OCI-LY7 (cell line): ENCODE measurements at regions of chr11 and their contacts with region 1.

Region 1: GRCh38 chr11:43282607-43283440 is 29.0 kb upstream of the API5 start:
- DNase-seq: peak; percentile 53
- H3K4me3 ChIP-seq: no peak overlapping the region
- H3K27ac ChIP-seq: no peak overlapping the region
- H3K4me1 ChIP-seq: no peaks in the 10 kb centered on the region
- CTCF ChIP-seq: peak; percentile 99

Region 2: DNA sequence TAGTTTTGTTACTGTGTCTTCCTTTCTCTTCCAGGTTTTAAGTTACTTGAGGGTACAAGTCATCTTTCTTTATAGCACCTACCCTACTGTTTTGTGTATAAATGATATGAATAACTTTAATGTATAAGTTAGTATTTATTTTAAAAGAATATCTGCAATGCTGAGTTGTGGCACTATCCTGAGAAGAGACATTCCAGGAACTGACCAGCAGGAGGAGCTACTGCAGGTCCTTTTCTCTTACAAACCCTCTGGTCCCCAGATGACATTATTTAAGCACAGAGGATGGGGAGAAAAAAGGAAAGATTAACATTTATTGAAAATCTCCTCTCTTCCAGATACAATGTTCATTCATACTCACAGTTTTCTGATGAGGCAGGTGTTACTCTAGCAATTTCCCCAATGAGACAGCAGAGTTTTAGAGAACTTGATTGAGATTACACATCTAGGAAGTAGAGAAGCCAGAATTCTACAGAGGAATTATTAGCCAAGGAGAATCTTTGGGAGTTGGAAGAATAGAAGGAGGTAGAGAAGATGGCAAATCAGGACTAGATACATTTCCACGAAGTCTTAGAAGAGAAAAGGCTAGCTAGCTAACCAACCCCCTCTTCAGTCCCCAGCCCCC is 512.3 kb before region 1 on chr11:
- CTCF ChIA-PET with region 1: no interaction called
- POLR2A ChIA-PET with region 1: interaction called, 3 read pairs
- intact Hi-C with region 1: loop called (anchors 2 kb)
- DNase-seq: peak; percentile 28
- H3K4me3 ChIP-seq: no peak overlapping the region
- H3K27ac ChIP-seq: no peak overlapping the region
- H3K4me1 ChIP-seq: no peaks in the 10 kb centered on the region
- CTCF ChIP-seq: peak; percentile 85

Region 3: GRCh38 chr11:43222215-43222614 is 60.6 kb before region 1 on chr11:
- CTCF ChIA-PET with region 1: no interaction called
- POLR2A ChIA-PET with region 1: no interaction called
- intact Hi-C with region 1: loop called (anchors 10 kb)
- DNase-seq: no peak
- H3K4me3 ChIP-seq: no peak overlapping the region
- H3K27ac ChIP-seq: no peak overlapping the region
- H3K4me1 ChIP-seq: no peaks in the 10 kb centered on the region
- CTCF ChIP-seq: no peak